ENCODE measurements at regions of chr12 and their contacts with region 1.

Region 1: GRCh38 chr12:14403711-14404196 is 38.3 kb downstream of the ATF7IP start:
- DNase-seq: no peak
- ATAC-seq: peak; percentile 51
- H3K4me3 Mint-ChIP-seq: peak overlapping the region; percentile 67
- H3K27ac Mint-ChIP-seq: peak overlapping the region; percentile 93
- H3K4me1 Mint-ChIP-seq: peaks cover 81% of the 10 kb centered on the region
- H3K27me3 Mint-ChIP-seq: no peaks in the 10 kb centered on the region
- CTCF ChIP-seq: no peak

Region 2: DNA sequence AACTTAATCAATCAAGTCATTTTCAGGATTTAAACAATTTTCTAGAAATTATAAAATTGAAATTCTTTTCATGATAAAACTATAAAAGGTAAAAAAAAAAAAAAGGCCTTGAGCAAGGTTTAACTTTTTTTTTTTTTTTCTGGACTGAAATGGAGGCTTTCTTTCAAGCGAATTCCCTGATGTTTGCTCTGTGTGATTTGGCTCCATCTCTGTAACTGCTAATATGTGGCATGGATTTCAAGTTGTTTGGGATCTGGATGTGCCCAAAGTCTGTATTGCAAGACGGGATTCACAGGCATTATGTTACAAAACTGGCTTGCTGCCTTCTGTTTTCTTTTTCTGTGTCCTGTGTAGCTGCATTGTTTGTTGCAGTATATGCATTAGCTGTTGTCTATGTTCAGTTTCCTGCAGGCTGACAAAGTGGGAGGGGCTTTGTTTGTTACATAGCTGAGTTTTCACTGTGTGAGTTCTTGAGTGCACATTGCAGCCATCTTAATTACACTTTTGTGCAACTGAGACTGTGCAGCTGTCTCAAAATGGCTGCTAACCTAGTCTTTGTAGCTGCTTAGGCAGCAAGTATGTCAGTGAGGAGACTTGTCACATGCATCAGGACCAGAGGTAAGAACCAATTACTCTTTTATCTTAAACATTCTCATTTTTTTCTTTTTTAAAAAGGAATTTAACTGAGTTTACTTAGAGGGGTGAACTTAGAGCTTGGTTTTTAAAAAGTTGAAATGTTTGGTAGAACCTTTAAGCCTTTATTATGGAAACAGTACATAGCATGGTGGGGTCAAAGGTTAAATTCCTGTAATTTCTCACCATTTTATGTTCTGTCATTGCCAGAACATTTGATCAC is 18.7 kb before region 1 on chr12:
- CTCF ChIA-PET with region 1: interaction called, 4 read pairs
- POLR2A ChIA-PET with region 1: interaction called, 15 read pairs
- intact Hi-C with region 1: no loop called
- DNase-seq: peak; percentile 81
- ATAC-seq: peak; percentile 95
- H3K4me3 Mint-ChIP-seq: peak overlapping the region; percentile 74
- H3K27ac Mint-ChIP-seq: peak overlapping the region; percentile 96
- H3K4me1 Mint-ChIP-seq: peaks cover 56% of the 10 kb centered on the region
- H3K27me3 Mint-ChIP-seq: no peaks in the 10 kb centered on the region
- CTCF ChIP-seq: no peak

Region 3: GRCh38 chr12:14417715-14418114 is 14.0 kb after region 1 on chr12:
- CTCF ChIA-PET with region 1: interaction called, 18 read pairs
- POLR2A ChIA-PET with region 1: interaction called, 3 read pairs
- intact Hi-C with region 1: no loop called
- DNase-seq: peak; percentile 90
- ATAC-seq: peak; percentile 82
- H3K4me3 Mint-ChIP-seq: peak overlapping the region; percentile 63
- H3K27ac Mint-ChIP-seq: peak overlapping the region; percentile 91
- H3K4me1 Mint-ChIP-seq: peaks cover 59% of the 10 kb centered on the region
- H3K27me3 Mint-ChIP-seq: no peaks in the 10 kb centered on the region
- CTCF ChIP-seq: no peak